BJ (cell line): ENCODE measurements at regions of chr1 and their contacts with region 1.

Region 1: GRCh38 chr1:200971955-200972711 is 51.4 kb downstream of the KIF21B start:
- DNase-seq: no peak
- H3K4me3 ChIP-seq: no peak overlapping the region
- H3K27me3 ChIP-seq: no peaks in the 10 kb centered on the region
- CTCF ChIP-seq: peak; percentile 74

Region 2: GRCh38 chr1:200982071-200982995 is 10.2 kb after region 1 on chr1:
- CTCF ChIA-PET with region 1: interaction called, 22 read pairs
- POLR2A ChIA-PET with region 1: no interaction called
- DNase-seq: no peak
- H3K4me3 ChIP-seq: no peak overlapping the region
- H3K27me3 ChIP-seq: peaks cover 1% of the 10 kb centered on the region; the same call in 1 of the 2 replicates
- CTCF ChIP-seq: no peak

Region 3: GRCh38 chr1:201019321-201019977 is 47.3 kb after region 1 on chr1:
- CTCF ChIA-PET with region 1: interaction called, 22 read pairs
- POLR2A ChIA-PET with region 1: no interaction called
- DNase-seq: no peak
- H3K4me3 ChIP-seq: no peak overlapping the region
- H3K27me3 ChIP-seq: peaks cover 33% of the 10 kb centered on the region
- CTCF ChIP-seq: no peak

Region 4: GRCh38 chr1:201114236-201115131 is 142.4 kb after region 1 on chr1:
- CTCF ChIA-PET with region 1: interaction called, 24 read pairs
- POLR2A ChIA-PET with region 1: no interaction called
- DNase-seq: peak; percentile 61
- H3K4me3 ChIP-seq: peak overlapping the region; percentile 58
- H3K27me3 ChIP-seq: peaks cover 3% of the 10 kb centered on the region; the same call in 1 of the 2 replicates
- CTCF ChIP-seq: peak; percentile 92